ENCODE measurements at regions of chrX and their contacts with region 1.

Region 1: DNA sequence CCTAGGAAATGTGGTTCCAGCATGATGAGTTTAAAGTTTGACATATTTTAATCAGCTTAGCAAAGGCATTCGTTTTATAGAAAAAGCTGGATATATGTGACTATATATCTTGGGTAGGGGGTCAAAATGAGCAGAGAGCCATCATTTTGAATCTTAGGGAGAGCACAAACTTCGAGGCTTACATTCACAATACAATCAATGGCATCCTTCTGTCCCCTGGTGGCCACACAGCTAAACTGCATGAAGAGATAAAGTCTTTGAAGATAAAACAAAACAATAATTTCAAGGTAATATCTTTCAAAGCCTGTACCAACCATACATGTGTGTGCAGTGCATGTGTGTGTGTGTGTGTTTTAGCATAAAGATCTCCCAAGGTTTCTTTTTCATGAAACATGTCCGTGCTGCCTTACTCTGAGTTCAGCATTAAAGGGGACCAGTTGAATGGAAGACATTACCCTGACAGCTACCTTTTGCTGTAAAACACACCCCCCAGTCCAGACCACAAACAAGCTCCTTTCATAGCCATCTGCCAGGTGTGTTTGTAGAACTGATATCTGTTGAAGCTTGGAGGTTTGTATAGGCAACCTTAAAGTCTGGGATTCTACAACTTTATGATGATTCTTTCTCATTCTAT is 22.0 kb downstream of the DYNLT3 start:
- DNase-seq: peak; percentile 52
- H3K4me3 Mint-ChIP-seq: no peak overlapping the region
- H3K27ac Mint-ChIP-seq: no peak overlapping the region
- H3K4me1 Mint-ChIP-seq: peaks cover 9% of the 10 kb centered on the region
- H3K27me3 Mint-ChIP-seq: no peaks in the 10 kb centered on the region
- CTCF ChIP-seq: peak; percentile 69

Region 2: GRCh38 chrX:37509349-37509748 is 316.0 kb before region 1 on chrX:
- CTCF ChIA-PET with region 1: no interaction called
- intact Hi-C with region 1: loop called (anchors 1 kb)
- DNase-seq: peak; percentile 18
- H3K4me3 Mint-ChIP-seq: no peak overlapping the region
- H3K27ac Mint-ChIP-seq: no peak overlapping the region
- H3K4me1 Mint-ChIP-seq: no peaks in the 10 kb centered on the region
- H3K27me3 Mint-ChIP-seq: no peaks in the 10 kb centered on the region
- CTCF ChIP-seq: no peak

Region 3: GRCh38 chrX:37578045-37578444 is 247.3 kb before region 1 on chrX:
- CTCF ChIA-PET with region 1: no interaction called
- intact Hi-C with region 1: no loop called
- DNase-seq: no peak
- H3K4me3 Mint-ChIP-seq: no peak overlapping the region
- H3K27ac Mint-ChIP-seq: no peak overlapping the region
- H3K4me1 Mint-ChIP-seq: peaks cover 13% of the 10 kb centered on the region
- H3K27me3 Mint-ChIP-seq: no peaks in the 10 kb centered on the region
- CTCF ChIP-seq: no peak

Region 4: GRCh38 chrX:37745354-37745753 is 80.0 kb before region 1 on chrX:
- CTCF ChIA-PET with region 1: interaction called, 23 read pairs
- intact Hi-C with region 1: loop called (anchors 1 kb)
- DNase-seq: peak; percentile 76
- H3K4me3 Mint-ChIP-seq: no peak overlapping the region
- H3K27ac Mint-ChIP-seq: no peak overlapping the region
- H3K4me1 Mint-ChIP-seq: peaks cover 17% of the 10 kb centered on the region
- H3K27me3 Mint-ChIP-seq: no peaks in the 10 kb centered on the region
- CTCF ChIP-seq: peak; percentile 62

Region 5: DNA sequence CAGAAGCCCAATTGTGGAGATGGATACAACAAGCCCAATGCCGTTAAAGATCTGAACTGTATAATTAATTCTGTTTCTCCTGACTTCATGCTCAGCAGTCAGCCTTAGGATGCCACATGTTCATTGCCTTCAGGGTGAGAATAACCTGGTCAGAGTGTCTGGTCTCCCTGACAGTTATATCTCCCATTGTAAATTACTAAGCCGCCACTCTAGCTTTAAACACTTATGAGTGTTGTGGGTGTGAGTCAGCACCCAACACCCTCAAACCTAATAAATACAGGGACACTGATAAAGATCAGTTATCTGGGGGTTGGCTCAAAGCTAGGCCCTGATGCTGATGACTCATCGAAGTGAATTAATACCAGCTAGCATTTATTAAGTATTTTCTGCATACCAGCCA is 87.0 kb after region 1 on chrX:
- CTCF ChIA-PET with region 1: no interaction called
- intact Hi-C with region 1: loop called (anchors 5 kb)
- DNase-seq: peak; percentile 21
- H3K4me3 Mint-ChIP-seq: no peak overlapping the region
- H3K27ac Mint-ChIP-seq: no peak overlapping the region
- H3K4me1 Mint-ChIP-seq: no peaks in the 10 kb centered on the region
- H3K27me3 Mint-ChIP-seq: no peaks in the 10 kb centered on the region
- CTCF ChIP-seq: no peak

Region 6: DNA sequence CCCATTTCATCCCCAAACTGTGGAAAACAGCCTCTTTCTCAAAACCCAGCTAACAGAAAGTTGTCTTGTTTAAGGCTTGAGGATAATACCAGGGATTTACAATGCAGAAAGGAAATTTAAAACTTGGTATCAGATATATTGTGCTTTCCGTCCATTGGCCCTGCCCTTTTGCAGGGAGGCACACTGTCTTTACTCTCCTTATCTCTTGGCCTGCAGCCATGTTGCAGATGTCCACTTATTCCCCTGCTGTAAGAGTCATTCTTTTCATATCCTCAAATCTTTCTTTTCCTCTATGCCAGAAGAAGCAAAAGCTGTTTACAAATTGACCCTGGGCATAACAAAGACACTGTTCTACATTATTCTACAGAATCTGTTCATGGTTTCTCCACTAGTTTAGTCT is 97.6 kb after region 1 on chrX:
- CTCF ChIA-PET with region 1: no interaction called
- intact Hi-C with region 1: no loop called
- DNase-seq: no peak
- H3K4me3 Mint-ChIP-seq: no peak overlapping the region
- H3K27ac Mint-ChIP-seq: no peak overlapping the region
- H3K4me1 Mint-ChIP-seq: peaks cover 8% of the 10 kb centered on the region
- H3K27me3 Mint-ChIP-seq: no peaks in the 10 kb centered on the region
- CTCF ChIP-seq: no peak

Region 7: DNA sequence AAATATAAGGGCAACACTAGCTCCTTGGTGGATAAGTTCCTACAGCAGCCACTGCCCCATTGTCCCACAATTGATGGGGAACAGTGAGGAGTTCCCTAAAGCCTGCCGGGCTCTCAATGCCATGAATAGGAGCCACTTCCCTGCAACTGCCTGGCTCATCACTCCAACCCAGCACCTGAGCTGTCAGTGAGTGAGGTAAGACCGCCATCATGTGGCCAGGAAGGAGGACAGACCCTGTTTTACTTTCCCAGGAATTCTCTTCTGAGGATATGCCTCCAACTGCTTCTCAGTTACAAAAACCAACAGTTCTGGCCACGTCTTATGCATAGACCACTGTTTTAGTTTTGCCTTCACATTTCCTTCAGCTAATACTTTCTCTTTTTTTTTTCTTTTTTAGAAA is 349.8 kb after region 1 on chrX:
- CTCF ChIA-PET with region 1: no interaction called
- intact Hi-C with region 1: loop called (anchors 10 kb)
- DNase-seq: peak; percentile 56
- H3K4me3 Mint-ChIP-seq: no peak overlapping the region
- H3K27ac Mint-ChIP-seq: no peak overlapping the region
- H3K4me1 Mint-ChIP-seq: no peaks in the 10 kb centered on the region
- H3K27me3 Mint-ChIP-seq: peaks cover 4% of the 10 kb centered on the region
- CTCF ChIP-seq: peak; percentile 39